ENCODE measurements at regions of chr13 and their contacts with region 1.

Region 1: GRCh38 chr13:28796938-28797257 is 23.2 kb upstream of the MTUS2 start:
- DNase-seq: no peak
- H3K4me3 ChIP-seq: no peak overlapping the region
- H3K27ac ChIP-seq: no peak overlapping the region
- H3K4me1 ChIP-seq: peaks cover 0 to 4% (median 0%) of the 10 kb centered on the region in 4 experiments; a peak in 1 of 7 replicates
- H3K27me3 ChIP-seq: no peaks in the 10 kb centered on the region
- CTCF ChIP-seq: no peak
- EP300 ChIP-seq: no peak
- POLR2A ChIP-seq: no peak
- RAD21 ChIP-seq: no peak

Region 2: GRCh38 chr13:28679628-28680027 is 117.3 kb before region 1 on chr13:
- CTCF ChIA-PET with region 1: interaction called, 18 read pairs
- POLR2A ChIA-PET with region 1: interaction called, 3 read pairs
- DNase-seq: no peak
- H3K4me3 ChIP-seq: no peak overlapping the region
- H3K27ac ChIP-seq: no peak overlapping the region
- H3K4me1 ChIP-seq: peaks cover 1 to 7% (median 2%) of the 10 kb centered on the region in 4 experiments; a peak in 5 of 7 replicates
- H3K27me3 ChIP-seq: no peaks in the 10 kb centered on the region
- CTCF ChIP-seq: peak in 1 of 3 experiments; percentile 41; a peak in 2 of 4 replicates
- EP300 ChIP-seq: no peak
- POLR2A ChIP-seq: no peak
- RAD21 ChIP-seq: peak in 1 of 2 experiments; percentile 34; a peak in 3 of 4 replicates

Region 3: GRCh38 chr13:28817204-28817603 is 20.3 kb after region 1 on chr13:
- CTCF ChIA-PET with region 1: interaction called, 15 read pairs
- POLR2A ChIA-PET with region 1: no interaction called
- DNase-seq: no peak
- H3K4me3 ChIP-seq: no peak overlapping the region
- H3K27ac ChIP-seq: no peak overlapping the region
- H3K4me1 ChIP-seq: peaks cover 0 to 4% (median 0%) of the 10 kb centered on the region in 4 experiments; a peak in 2 of 7 replicates
- H3K27me3 ChIP-seq: peaks cover 0 to 30% (median 19%) of the 10 kb centered on the region in 4 experiments; a peak in 6 of 7 replicates
- CTCF ChIP-seq: peak; percentile 31 to 72 (median 40); a peak in 3 of 4 replicates
- EP300 ChIP-seq: no peak
- POLR2A ChIP-seq: no peak
- RAD21 ChIP-seq: peak; percentile 50 to 57

Measured in H1 (cell line).